ENCODE measurements at regions of chr13 and their contacts with region 1.

Region 1: GRCh38 chr13:73228546-73228945 is 169.7 kb downstream of the KLF5 start:
- DNase-seq: no peak
- H3K4me3 ChIP-seq: no peak overlapping the region
- H3K4me3 Mint-ChIP-seq: no peak overlapping the region
- H3K27ac Mint-ChIP-seq: no peak overlapping the region
- H3K4me1 ChIP-seq: peaks cover 12% of the 10 kb centered on the region
- H3K4me1 Mint-ChIP-seq: peaks cover 4% of the 10 kb centered on the region
- H3K27me3 ChIP-seq: no peaks in the 10 kb centered on the region
- H3K27me3 Mint-ChIP-seq: no peaks in the 10 kb centered on the region
- CTCF ChIP-seq: peak; percentile 14 to 23

Region 2: DNA sequence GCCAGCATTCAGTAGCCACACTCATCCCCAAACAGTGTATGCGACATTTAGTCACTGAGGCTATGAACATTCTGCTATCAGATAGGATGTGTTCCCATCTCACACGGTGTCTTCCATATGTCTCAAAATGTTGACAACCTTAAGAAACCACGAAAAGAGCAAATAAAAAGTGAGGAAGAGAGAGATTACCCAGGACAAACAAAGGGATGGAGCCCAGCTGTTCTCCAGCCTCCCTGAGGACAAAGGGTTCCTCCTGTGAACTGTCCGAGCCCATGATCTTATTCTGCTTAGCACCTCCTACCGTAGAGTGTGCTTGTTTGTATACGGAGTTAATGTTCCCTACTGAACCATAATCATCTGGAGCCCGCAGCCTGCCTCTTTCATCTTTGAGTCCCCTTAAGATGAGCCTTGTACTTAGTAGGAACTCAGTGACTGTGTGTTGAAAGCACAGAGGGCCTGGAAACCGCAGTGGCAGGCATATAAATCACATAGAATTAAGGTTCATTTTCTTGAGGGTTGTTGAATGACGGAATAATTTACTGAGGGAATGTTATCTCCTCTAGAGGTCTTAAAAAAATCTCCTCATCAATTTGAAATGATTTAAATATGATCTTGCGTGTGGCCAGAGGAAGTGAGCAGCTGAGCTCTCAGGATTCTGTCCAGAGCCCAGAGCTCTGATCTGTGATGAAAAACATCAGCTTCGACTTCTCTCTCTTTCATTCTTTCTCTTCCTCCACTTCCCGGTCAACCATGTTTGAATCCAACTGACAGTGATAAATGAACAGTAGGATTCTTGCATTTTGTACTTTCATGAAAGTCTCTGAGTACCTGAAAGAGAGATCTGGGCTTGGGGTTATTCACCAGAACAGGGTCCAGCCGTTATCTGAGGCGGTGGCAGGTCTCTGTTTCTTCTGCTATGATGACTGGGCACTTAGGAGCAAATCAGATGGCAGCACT is 30.8 kb after region 1 on chr13:
- CTCF ChIA-PET with region 1: no interaction called
- POLR2A ChIA-PET with region 1: no interaction called
- intact Hi-C with region 1: no loop called
- DNase-seq: no peak
- H3K4me3 ChIP-seq: no peak overlapping the region
- H3K4me3 Mint-ChIP-seq: no peak overlapping the region
- H3K27ac Mint-ChIP-seq: peak overlapping the region; percentile 60
- H3K4me1 ChIP-seq: peaks cover 26% of the 10 kb centered on the region
- H3K4me1 Mint-ChIP-seq: peaks cover 40% of the 10 kb centered on the region
- H3K27me3 ChIP-seq: no peaks in the 10 kb centered on the region
- H3K27me3 Mint-ChIP-seq: no peaks in the 10 kb centered on the region
- CTCF ChIP-seq: no peak

Region 3: GRCh38 chr13:73417015-73417623 is 188.6 kb after region 1 on chr13:
- CTCF ChIA-PET with region 1: no interaction called
- POLR2A ChIA-PET with region 1: no interaction called
- intact Hi-C with region 1: loop called (anchors 2 kb)
- DNase-seq: peak in 1 of 2 experiments; percentile 55
- H3K4me3 ChIP-seq: no peak overlapping the region
- H3K4me3 Mint-ChIP-seq: no peak overlapping the region
- H3K27ac Mint-ChIP-seq: no peak overlapping the region
- H3K4me1 ChIP-seq: peaks cover 19% of the 10 kb centered on the region
- H3K4me1 Mint-ChIP-seq: peaks cover 15% of the 10 kb centered on the region
- H3K27me3 ChIP-seq: no peaks in the 10 kb centered on the region
- H3K27me3 Mint-ChIP-seq: no peaks in the 10 kb centered on the region
- CTCF ChIP-seq: peak; percentile 38 to 45

Measured in Caco-2 (cell line).